PC-3 (cell line): ENCODE measurements at regions of chr5 and their contacts with region 1.

Region 1: GRCh38 chr5:111680737-111681413 is 76.1 kb downstream of the NREP start:
- DNase-seq: peak; percentile 97
- ATAC-seq: peak; percentile 88
- H3K4me3 ChIP-seq: peak overlapping the region; percentile 50
- H3K27ac ChIP-seq: peak overlapping the region; percentile 87
- H3K4me1 ChIP-seq: peaks cover 30% of the 10 kb centered on the region
- H3K27me3 ChIP-seq: no peaks in the 10 kb centered on the region
- CTCF ChIP-seq: no peak

Region 2: GRCh38 chr5:111550279-111551020 is 130.4 kb before region 1 on chr5:
- CTCF ChIA-PET with region 1: interaction called, 5 read pairs
- POLR2A ChIA-PET with region 1: no interaction called
- intact Hi-C with region 1: loop called (anchors 1 kb)
- DNase-seq: peak; percentile 97
- ATAC-seq: peak; percentile 89
- H3K4me3 ChIP-seq: no peak overlapping the region
- H3K27ac ChIP-seq: peak overlapping the region; percentile 54
- H3K4me1 ChIP-seq: peaks cover 21% of the 10 kb centered on the region
- H3K27me3 ChIP-seq: no peaks in the 10 kb centered on the region
- CTCF ChIP-seq: peak; percentile 80

Region 3: DNA sequence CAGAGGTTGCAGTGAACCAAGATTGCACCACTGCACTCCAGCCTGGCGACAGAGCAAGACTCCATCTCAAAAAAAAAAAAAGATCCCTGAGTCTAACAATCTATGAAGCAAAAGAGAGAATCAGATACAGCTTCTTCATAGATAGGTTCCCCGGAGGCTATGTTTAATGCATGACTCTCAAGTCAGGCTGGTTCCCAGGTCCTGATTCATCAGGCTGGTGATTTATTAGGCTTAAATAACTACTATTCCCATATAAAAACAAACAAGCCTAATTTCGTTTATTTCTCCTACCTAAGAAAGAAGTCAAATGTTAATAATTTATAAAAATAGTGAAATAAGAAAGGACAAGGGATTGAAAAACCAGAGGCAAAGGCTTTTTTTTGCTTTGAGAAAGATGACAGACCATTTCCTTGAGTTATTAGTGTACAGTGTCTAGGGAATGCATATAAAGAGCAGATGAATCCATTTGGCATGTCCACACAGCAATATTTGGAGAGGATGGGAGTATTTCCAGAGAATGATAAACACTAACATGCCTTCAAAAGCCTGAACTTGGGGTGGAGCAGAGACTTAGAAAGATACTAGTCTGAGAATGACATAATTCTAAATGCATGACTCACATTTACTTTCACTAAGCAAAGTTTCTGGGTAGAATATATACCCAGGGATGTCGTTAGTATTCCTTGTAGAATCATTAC is 39.2 kb before region 1 on chr5:
- CTCF ChIA-PET with region 1: interaction called, 3 read pairs
- POLR2A ChIA-PET with region 1: no interaction called
- intact Hi-C with region 1: loop called (anchors 2 kb)
- DNase-seq: peak; percentile 83
- ATAC-seq: peak; percentile 90
- H3K4me3 ChIP-seq: peak overlapping the region; percentile 13; the same call in 1 of the 2 replicates
- H3K27ac ChIP-seq: peak overlapping the region; percentile 93
- H3K4me1 ChIP-seq: peaks cover 18% of the 10 kb centered on the region
- H3K27me3 ChIP-seq: no peaks in the 10 kb centered on the region
- CTCF ChIP-seq: no peak

Region 4: GRCh38 chr5:111697881-111698757 is 17.2 kb after region 1 on chr5:
- CTCF ChIA-PET with region 1: no interaction called
- POLR2A ChIA-PET with region 1: no interaction called
- intact Hi-C with region 1: loop called (anchors 2 kb)
- DNase-seq: peak; percentile 18
- ATAC-seq: no peak
- H3K4me3 ChIP-seq: no peak overlapping the region
- H3K27ac ChIP-seq: no peak overlapping the region
- H3K4me1 ChIP-seq: peaks cover 32% of the 10 kb centered on the region
- H3K27me3 ChIP-seq: no peaks in the 10 kb centered on the region
- CTCF ChIP-seq: 0 out of 2 replicates have a peak, but pooled peaks have one; percentile 21

Region 5: DNA sequence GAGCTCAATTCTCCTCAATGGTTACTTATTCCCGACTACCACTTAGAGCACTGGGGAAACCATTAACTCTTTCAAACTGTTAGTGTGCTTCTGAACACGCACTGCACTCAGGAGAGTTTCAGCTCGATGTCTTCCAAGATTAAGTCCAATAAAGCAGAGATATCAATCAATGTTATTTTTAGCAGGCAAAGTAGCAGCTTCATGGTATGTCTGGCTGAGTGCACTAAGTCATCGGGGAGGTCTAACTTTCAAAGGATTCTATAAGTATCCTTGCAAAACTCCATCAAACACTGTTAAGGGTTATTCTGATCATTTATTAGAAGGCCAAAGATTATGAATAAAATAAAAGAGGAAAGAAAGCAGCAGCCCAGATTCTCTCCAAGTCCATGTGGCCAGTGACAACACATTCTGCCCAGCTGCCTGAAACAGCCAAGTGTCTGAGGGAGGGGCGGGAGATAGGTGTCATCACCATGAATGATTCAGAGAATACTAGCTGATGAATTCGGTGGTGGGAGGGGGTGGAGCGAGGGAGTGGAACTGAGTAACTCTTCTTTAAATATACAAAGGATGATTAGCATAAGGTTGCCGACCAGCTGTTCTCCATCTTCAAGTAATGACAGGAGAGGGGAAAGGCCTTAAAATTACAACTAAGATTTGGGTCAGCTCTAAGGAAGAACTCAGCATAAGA is 54.9 kb after region 1 on chr5:
- CTCF ChIA-PET with region 1: no interaction called
- POLR2A ChIA-PET with region 1: no interaction called
- intact Hi-C with region 1: loop called (anchors 1 kb)
- DNase-seq: peak; percentile 83
- ATAC-seq: peak; percentile 76
- H3K4me3 ChIP-seq: no peak overlapping the region
- H3K27ac ChIP-seq: no peak overlapping the region
- H3K4me1 ChIP-seq: peaks cover 49% of the 10 kb centered on the region
- H3K27me3 ChIP-seq: no peaks in the 10 kb centered on the region
- CTCF ChIP-seq: no peak

Region 6: GRCh38 chr5:111748304-111748763 is 67.5 kb after region 1 on chr5:
- CTCF ChIA-PET with region 1: no interaction called
- POLR2A ChIA-PET with region 1: no interaction called
- intact Hi-C with region 1: loop called (anchors 2 kb)
- DNase-seq: peak; percentile 95
- ATAC-seq: peak; percentile 80
- H3K4me3 ChIP-seq: peak overlapping the region; percentile 56; the same call in 1 of the 2 replicates
- H3K27ac ChIP-seq: peak overlapping the region; percentile 99
- H3K4me1 ChIP-seq: peaks cover 48% of the 10 kb centered on the region
- H3K27me3 ChIP-seq: no peaks in the 10 kb centered on the region
- CTCF ChIP-seq: no peak

Region 7: DNA sequence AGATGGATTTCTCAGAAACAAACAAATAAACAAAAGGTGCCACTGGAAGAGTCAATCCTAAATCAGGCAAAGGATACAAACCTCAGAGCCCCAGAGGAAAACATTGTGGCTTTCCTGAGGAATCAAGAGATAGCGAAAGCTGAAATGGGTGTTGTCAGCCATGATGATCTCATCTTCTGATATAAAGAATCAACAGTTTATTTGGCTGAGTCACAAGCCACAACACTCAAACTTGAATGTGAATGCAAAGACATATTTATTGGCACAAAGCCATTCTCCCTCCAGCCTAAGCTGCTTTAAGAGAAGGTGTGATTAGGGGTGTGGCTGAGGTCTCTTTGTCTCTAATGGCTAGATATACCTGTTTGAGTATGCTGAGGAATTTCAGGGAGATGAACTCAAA is 149.5 kb after region 1 on chr5:
- CTCF ChIA-PET with region 1: no interaction called
- POLR2A ChIA-PET with region 1: no interaction called
- intact Hi-C with region 1: loop called (anchors 10 kb)
- DNase-seq: peak; percentile 98
- ATAC-seq: peak; percentile 89
- H3K4me3 ChIP-seq: no peak overlapping the region
- H3K27ac ChIP-seq: peak overlapping the region; percentile 33
- H3K4me1 ChIP-seq: peaks cover 15% of the 10 kb centered on the region
- H3K27me3 ChIP-seq: no peaks in the 10 kb centered on the region
- CTCF ChIP-seq: no peak